ENCODE measurements at regions of chr4 and their contacts with region 1.

Region 1: GRCh38 chr4:154314248-154314647 is 177.4 kb downstream of the DCHS2 start:
- DNase-seq: peak; percentile 53
- H3K4me3 Mint-ChIP-seq: no peak overlapping the region
- H3K27ac Mint-ChIP-seq: no peak overlapping the region
- H3K4me1 Mint-ChIP-seq: no peaks in the 10 kb centered on the region
- H3K27me3 Mint-ChIP-seq: no peaks in the 10 kb centered on the region
- CTCF ChIP-seq: peak; percentile 39

Region 2: DNA sequence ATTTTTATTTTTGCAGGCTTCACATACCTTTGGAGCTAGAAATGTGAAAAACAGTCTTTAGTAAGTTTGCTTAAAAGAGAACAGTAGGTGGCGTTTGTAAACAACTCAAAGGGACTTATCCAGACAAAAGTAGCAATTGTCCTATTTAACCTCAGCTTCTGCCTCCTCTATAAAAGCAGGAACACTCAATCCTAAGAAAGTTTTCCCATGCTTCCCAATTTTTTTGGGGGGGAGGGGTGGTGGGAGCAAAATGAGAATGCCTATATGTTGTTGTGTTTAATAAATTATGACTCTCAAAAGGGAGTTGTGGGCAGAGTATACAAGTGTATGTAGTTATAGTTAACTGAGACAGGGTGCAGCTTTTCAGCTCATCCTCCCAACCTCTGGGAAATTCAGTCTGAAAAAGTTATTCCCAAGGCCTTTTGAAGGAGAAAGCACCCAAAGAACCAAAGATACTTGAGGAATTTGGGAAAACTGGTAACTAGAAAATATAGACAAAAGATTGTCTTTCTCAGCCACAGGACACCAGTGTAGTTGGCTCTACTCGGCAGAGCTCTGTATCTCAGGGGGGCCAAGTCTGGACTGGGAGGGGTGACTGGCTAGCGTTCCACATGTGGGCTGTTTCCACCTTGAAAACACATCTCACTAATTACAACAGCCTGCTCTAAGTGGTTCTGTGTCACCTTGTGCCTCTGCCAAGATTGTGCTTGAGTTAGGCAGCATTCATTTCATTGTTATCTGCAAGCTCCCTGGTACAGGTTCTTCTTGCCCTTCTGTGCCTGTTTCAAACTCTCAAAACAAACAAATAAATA is 528.1 kb before region 1 on chr4:
- CTCF ChIA-PET with region 1: interaction called, 10 read pairs
- POLR2A ChIA-PET with region 1: interaction called, 3 read pairs
- intact Hi-C with region 1: loop called (anchors 1 kb)
- DNase-seq: peak; percentile 49
- H3K4me3 Mint-ChIP-seq: no peak overlapping the region
- H3K27ac Mint-ChIP-seq: no peak overlapping the region
- H3K4me1 Mint-ChIP-seq: peaks cover 13% of the 10 kb centered on the region
- H3K27me3 Mint-ChIP-seq: no peaks in the 10 kb centered on the region
- CTCF ChIP-seq: peak; percentile 47

Region 3: DNA sequence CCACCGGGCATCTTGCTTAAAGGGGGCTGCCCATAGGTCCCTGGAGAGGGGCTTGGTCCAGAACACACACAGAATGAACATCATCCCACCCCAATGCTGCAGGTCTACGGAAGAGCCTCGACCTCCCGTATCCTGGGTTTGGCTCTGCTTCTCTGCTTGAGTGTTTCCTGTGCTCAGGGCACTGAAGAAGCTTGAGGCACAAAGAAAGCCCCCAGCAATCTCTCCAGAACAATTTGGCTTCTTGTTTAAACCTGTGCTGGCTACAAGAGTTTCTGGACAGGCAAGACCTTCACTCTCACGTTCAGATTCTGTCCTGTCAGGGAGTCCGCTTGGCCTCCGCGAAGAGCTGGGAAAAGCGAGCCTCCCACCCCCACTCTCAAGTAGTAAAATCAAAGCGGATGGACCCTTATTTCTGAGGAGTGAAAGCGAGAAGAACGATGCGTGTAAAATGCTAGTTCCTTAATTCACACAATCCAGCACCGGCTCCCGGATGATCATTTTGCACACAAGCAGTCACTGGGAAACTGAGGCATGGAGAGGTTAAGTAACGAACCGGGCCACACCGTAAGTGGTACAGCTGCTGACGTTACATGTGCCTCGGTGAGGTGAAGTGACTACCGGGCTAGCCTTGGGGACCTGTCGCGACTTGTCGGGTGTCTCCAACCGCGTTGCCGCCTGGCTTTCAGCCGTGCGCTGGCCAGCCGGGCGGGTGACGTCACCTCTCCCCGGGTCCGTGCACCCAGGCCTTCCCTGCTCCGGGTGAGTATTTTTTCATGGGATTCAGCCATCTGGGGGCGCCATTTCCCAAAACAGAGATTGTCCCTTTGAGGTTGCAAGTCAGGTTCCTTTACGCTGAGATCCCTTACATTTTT is 522.3 kb before region 1 on chr4:
- CTCF ChIA-PET with region 1: interaction called, 10 read pairs
- POLR2A ChIA-PET with region 1: no interaction called
- intact Hi-C with region 1: loop called (anchors 1 kb)
- DNase-seq: peak; percentile 57
- H3K4me3 Mint-ChIP-seq: no peak overlapping the region
- H3K27ac Mint-ChIP-seq: no peak overlapping the region
- H3K4me1 Mint-ChIP-seq: no peaks in the 10 kb centered on the region
- H3K27me3 Mint-ChIP-seq: no peaks in the 10 kb centered on the region
- CTCF ChIP-seq: peak; percentile 25

Region 4: DNA sequence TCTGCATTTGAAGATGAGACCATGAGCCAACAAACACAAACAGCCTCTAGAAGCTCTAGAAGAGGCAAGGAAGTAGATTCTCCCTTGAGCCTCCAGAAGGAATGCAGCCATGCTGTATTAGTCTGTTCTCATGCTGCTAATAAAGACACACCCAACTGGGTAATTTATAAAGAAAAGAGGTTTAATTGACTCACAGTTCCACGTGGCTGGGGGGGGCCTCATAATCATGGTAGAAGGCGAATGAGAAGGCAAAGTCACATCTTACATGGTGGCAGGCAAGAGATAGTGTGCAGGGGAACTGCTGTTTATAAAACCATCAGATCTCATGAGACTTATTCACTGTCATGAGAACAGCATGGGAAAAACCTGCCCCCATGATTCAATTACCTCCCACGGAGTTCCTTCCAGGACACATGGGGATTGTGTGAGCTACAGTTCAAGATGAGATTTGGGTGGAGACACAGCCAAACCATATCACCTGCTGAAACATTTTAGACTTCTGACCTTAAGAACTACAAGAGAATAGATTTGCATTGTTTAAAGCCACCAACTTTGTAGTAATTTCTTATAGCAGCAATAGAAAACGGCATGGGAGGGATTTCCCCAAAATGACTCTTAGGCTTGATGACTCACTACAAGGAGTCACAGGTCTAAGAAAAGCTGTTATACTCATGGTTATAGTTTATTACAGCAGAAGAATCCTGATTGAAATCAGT is 241.0 kb before region 1 on chr4:
- CTCF ChIA-PET with region 1: no interaction called
- POLR2A ChIA-PET with region 1: no interaction called
- intact Hi-C with region 1: loop called (anchors 10 kb)
- DNase-seq: peak; percentile 76
- H3K4me3 Mint-ChIP-seq: no peak overlapping the region
- H3K27ac Mint-ChIP-seq: no peak overlapping the region
- H3K4me1 Mint-ChIP-seq: peaks cover 13% of the 10 kb centered on the region
- H3K27me3 Mint-ChIP-seq: no peaks in the 10 kb centered on the region
- CTCF ChIP-seq: no peak

Region 5: GRCh38 chr4:154343651-154344050 is 29.4 kb after region 1 on chr4:
- CTCF ChIA-PET with region 1: no interaction called
- POLR2A ChIA-PET with region 1: no interaction called
- intact Hi-C with region 1: no loop called
- DNase-seq: no peak
- H3K4me3 Mint-ChIP-seq: no peak overlapping the region
- H3K27ac Mint-ChIP-seq: no peak overlapping the region
- H3K4me1 Mint-ChIP-seq: no peaks in the 10 kb centered on the region
- H3K27me3 Mint-ChIP-seq: no peaks in the 10 kb centered on the region
- CTCF ChIP-seq: no peak

Region 6: DNA sequence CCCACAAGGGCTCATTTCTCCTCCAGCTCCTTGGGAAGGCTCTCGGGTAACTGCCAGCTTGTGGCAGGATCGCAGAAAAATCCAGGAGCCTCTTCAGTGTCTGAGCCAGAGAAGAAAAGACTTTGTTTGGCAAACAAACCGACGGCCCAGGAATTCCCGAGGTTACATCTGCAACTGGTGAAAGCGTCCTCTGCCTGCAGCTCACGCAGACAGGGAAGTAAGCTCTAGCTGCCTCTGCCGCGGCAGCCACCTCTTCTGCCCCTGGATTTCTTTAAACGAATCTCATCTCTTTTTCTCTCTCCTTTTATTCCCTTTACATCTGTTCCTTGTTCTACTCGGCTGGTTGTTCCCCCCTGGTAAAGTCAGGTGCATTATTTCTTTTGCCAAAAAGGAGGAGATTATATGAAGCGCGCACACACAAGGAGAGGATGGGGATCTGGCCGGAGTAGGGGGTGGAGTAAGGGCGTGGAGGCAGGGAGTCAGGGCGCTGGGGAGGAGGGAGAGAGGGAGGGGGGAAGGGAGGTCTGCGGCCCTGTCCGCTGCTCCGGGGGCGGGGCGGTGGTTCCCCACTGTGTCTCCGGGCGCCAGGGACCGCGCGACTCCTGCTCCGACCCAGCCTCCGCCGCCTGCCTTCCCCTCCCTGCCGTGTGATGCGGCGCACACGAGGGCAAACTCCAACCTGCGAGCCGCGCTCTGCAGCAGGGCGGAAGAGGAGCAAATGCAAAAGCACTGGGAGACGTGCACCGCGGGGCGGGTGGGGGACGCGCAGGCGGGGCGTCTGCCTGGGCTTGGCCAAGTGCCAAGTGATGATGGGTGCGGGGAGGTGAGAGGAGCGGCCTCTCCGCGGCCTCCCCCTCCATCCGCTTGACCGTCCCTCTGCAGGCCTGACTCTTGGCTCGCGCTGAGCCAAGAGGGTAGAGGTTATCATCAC is 177.4 kb after region 1 on chr4 and contains the start of gene DCHS2:
- CTCF ChIA-PET with region 1: no interaction called
- POLR2A ChIA-PET with region 1: no interaction called
- intact Hi-C with region 1: no loop called
- DNase-seq: no peak
- H3K4me3 Mint-ChIP-seq: peak within 1 kb of the TSS; percentile 67
- H3K27ac Mint-ChIP-seq: no peak within 1 kb of the TSS
- H3K4me1 Mint-ChIP-seq: peaks cover 6% of the 10 kb centered on the region
- H3K27me3 Mint-ChIP-seq: no peaks in the 10 kb centered on the region
- CTCF ChIP-seq: no peak
- total RNA-seq, gene DCHS2: 0.02 and 0.17 TPM in 2 replicates

Region 7: DNA sequence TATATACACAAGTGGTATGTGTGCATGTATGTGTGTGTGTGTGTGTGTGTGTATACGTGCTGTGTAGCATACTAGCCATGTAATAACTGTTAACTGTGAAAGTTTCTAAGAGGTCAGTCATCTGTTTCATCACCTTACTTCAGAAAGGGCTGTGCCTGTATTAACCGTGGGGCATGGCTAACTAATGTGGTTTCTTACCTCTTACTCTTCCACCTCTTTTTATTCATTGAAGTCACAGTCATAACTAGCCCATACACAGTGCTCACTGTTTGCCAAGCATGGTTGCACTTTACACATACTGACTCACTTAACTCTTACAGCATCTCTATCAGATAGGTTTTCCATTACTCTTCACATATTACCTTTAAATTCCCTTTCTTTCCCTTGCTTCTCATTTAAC is 405.9 kb after region 1 on chr4:
- CTCF ChIA-PET with region 1: no interaction called
- POLR2A ChIA-PET with region 1: no interaction called
- intact Hi-C with region 1: no loop called
- DNase-seq: peak; percentile 72
- H3K4me3 Mint-ChIP-seq: no peak overlapping the region
- H3K27ac Mint-ChIP-seq: peak overlapping the region; percentile 93
- H3K4me1 Mint-ChIP-seq: peaks cover 33% of the 10 kb centered on the region
- H3K27me3 Mint-ChIP-seq: no peaks in the 10 kb centered on the region
- CTCF ChIP-seq: no peak

Measured in MCF 10A (cell line).